ENCODE measurements at regions of chr3 and their contacts with region 1.

Region 1: GRCh38 chr3:11803977-11804892 is 42.5 kb downstream of the TAMM41 start:
- DNase-seq: peak; percentile 56 to 77 (median 64)
- ATAC-seq: peak; percentile 94
- H3K4me3 ChIP-seq: no peak overlapping the region
- H3K27ac ChIP-seq: no peak overlapping the region
- H3K4me1 ChIP-seq: no peaks in the 10 kb centered on the region
- H3K27me3 ChIP-seq: no peaks in the 10 kb centered on the region
- CTCF ChIP-seq: peak; percentile 71 to 80 (median 76)
- EP300 ChIP-seq: no peak
- POLR2A ChIP-seq: no peak
- RAD21 ChIP-seq: peak in 1 of 2 experiments; percentile 69; a peak in 3 of 4 replicates

Region 2: DNA sequence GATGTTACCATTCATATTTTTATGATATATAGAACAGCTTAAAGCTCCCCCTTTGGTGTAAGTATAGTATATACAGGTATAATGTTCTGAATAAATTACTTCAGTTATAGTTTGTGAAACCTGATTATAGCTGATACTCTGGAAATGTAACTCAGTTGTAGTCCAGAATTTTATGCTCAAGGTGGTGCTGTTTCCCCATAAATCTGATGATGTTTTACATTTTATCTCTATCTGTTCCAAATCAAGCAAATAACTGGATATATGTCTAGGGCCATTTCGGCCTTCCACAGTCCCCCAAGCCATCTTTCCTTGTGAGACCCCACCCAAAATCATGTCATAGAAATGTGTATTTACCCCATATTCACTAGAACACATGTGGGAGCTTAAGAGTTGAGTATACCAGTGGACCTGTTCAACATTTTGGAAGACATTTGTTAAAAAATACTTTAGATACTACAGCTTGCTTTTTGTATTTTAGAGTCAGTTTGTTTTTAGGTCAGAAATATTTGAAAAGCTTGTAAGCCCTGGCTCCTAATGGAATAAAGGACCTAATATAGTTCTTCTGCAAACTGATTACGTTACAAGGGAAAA is 424.9 kb before region 1 on chr3:
- CTCF ChIA-PET with region 1: interaction called, 14 read pairs
- POLR2A ChIA-PET with region 1: no interaction called
- in situ Hi-C with region 1: no loop called
- intact Hi-C with region 1: loop called (anchors 1 kb)
- DNase-seq: peak in 2 of 4 experiments; percentile 19 to 29
- ATAC-seq: peak; percentile 74
- H3K4me3 ChIP-seq: no peak overlapping the region
- H3K27ac ChIP-seq: no peak overlapping the region
- H3K4me1 ChIP-seq: no peaks in the 10 kb centered on the region
- H3K27me3 ChIP-seq: no peaks in the 10 kb centered on the region
- CTCF ChIP-seq: peak; percentile 56 to 82 (median 59); a peak in 5 of 6 replicates
- EP300 ChIP-seq: no peak
- POLR2A ChIP-seq: no peak
- RAD21 ChIP-seq: peak; percentile 81 to 88

Region 3: GRCh38 chr3:11774294-11774877 is 29.8 kb before region 1 on chr3:
- CTCF ChIA-PET with region 1: interaction called, 5 read pairs
- POLR2A ChIA-PET with region 1: interaction called, 5 read pairs
- in situ Hi-C with region 1: no loop called
- intact Hi-C with region 1: loop called (anchors 1 kb)
- DNase-seq: peak; percentile 29 to 75 (median 50)
- ATAC-seq: peak; percentile 86
- H3K4me3 ChIP-seq: no peak overlapping the region
- H3K27ac ChIP-seq: no peak overlapping the region
- H3K4me1 ChIP-seq: peaks cover 8 to 11% of the 10 kb centered on the region in 2 experiments; a peak in 3 of 5 replicates
- H3K27me3 ChIP-seq: no peaks in the 10 kb centered on the region
- CTCF ChIP-seq: peak; percentile 63 to 74 (median 73)
- EP300 ChIP-seq: no peak
- POLR2A ChIP-seq: no peak
- RAD21 ChIP-seq: peak in 1 of 2 experiments; percentile 62; a peak in 2 of 4 replicates

Region 4: GRCh38 chr3:12536423-12536822 is 732.2 kb after region 1 on chr3:
- CTCF ChIA-PET with region 1: no interaction called
- POLR2A ChIA-PET with region 1: no interaction called
- in situ Hi-C with region 1: no loop called
- intact Hi-C with region 1: no loop called
- DNase-seq: no peak
- ATAC-seq: no peak
- H3K4me3 ChIP-seq: no peak overlapping the region
- H3K27ac ChIP-seq: no peak overlapping the region
- H3K4me1 ChIP-seq: no peaks in the 10 kb centered on the region
- H3K27me3 ChIP-seq: no peaks in the 10 kb centered on the region
- CTCF ChIP-seq: 0 out of 6 replicates have a peak, but pooled peaks of 1 of the 3 experiments have one; percentile 8
- EP300 ChIP-seq: no peak
- POLR2A ChIP-seq: no peak
- RAD21 ChIP-seq: no peak